B cell (primary cell): ENCODE measurements at regions of chr1 and their contacts with region 1.

Region 1: GRCh38 chr1:244835276-244836134 is at the start of gene COX20:
- DNase-seq: peak; percentile 97
- ATAC-seq: peak; percentile 69
- H3K4me3 ChIP-seq: peak within 1 kb of the TSS; percentile 89 to 98 (median 94)
- H3K4me3 Mint-ChIP-seq: peak within 1 kb of the TSS; percentile 100
- H3K27ac ChIP-seq: peak within 1 kb of the TSS; percentile 97
- H3K27ac Mint-ChIP-seq: peak within 1 kb of the TSS; percentile 100
- H3K4me1 ChIP-seq: peaks cover 21 to 27% of the 10 kb centered on the region in 2 donors
- H3K4me1 Mint-ChIP-seq: peaks cover 59% of the 10 kb centered on the region
- H3K27me3 ChIP-seq: no peaks in the 10 kb centered on the region
- H3K27me3 Mint-ChIP-seq: no peaks in the 10 kb centered on the region
- CTCF ChIP-seq: peak; percentile 13
- total RNA-seq, gene COX20: 35.7 and 37.7 TPM in 2 replicates

Region 2: GRCh38 chr1:244451951-244452795 is 383.3 kb before region 1 on chr1:
- CTCF ChIA-PET with region 1: no interaction called
- POLR2A ChIA-PET with region 1: no interaction called
- intact Hi-C with region 1: loop called (anchors 1 kb)
- DNase-seq: peak; percentile 100
- ATAC-seq: peak; percentile 92
- H3K4me3 ChIP-seq: peak overlapping the region in 4 of 5 experiments; percentile 88 to 98 (median 93)
- H3K4me3 Mint-ChIP-seq: peak overlapping the region; percentile 95
- H3K27ac ChIP-seq: peak overlapping the region; percentile 92 to 94
- H3K27ac Mint-ChIP-seq: peak overlapping the region; percentile 94
- H3K4me1 ChIP-seq: peaks cover 17 to 18% of the 10 kb centered on the region in 2 donors
- H3K4me1 Mint-ChIP-seq: peaks cover 35% of the 10 kb centered on the region
- H3K27me3 ChIP-seq: no peaks in the 10 kb centered on the region
- H3K27me3 Mint-ChIP-seq: no peaks in the 10 kb centered on the region
- CTCF ChIP-seq: peak; percentile 47

Region 3: DNA sequence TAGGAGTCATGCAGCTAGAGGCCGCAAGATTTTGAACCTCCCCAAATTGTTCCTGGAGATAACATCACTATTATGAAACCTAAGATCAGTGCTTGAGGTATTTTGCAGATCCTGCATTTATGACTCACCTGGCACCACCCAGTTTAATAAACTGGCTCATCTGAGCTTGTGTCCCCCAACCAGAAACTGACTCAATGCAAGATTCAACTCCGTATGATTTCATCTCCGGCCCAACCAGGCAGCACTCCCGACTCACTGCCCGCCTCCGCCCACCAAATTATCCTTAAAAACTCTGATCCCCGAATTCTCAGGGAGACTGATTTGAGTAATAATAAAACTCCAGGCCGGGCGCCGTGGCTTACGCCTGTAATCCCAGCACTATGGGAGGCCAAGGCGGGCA is 95.4 kb before region 1 on chr1:
- CTCF ChIA-PET with region 1: no interaction called
- POLR2A ChIA-PET with region 1: no interaction called
- intact Hi-C with region 1: no loop called
- DNase-seq: no peak
- ATAC-seq: no peak
- H3K4me3 ChIP-seq: no peak overlapping the region
- H3K4me3 Mint-ChIP-seq: no peak overlapping the region
- H3K27ac ChIP-seq: no peak overlapping the region
- H3K27ac Mint-ChIP-seq: no peak overlapping the region
- H3K4me1 ChIP-seq: peaks cover 5 to 7% of the 10 kb centered on the region in 2 donors
- H3K4me1 Mint-ChIP-seq: peaks cover 12% of the 10 kb centered on the region
- H3K27me3 ChIP-seq: no peaks in the 10 kb centered on the region
- H3K27me3 Mint-ChIP-seq: no peaks in the 10 kb centered on the region
- CTCF ChIP-seq: no peak

Region 4: GRCh38 chr1:244815600-244816099 is 19.9 kb before region 1 on chr1:
- CTCF ChIA-PET with region 1: interaction called, 6 read pairs
- POLR2A ChIA-PET with region 1: interaction called, 26 read pairs
- intact Hi-C with region 1: loop called (anchors 1 kb)
- DNase-seq: peak; percentile 76
- ATAC-seq: peak; percentile 69
- H3K4me3 ChIP-seq: peak overlapping the region; percentile 47 to 68 (median 55)
- H3K4me3 Mint-ChIP-seq: peak overlapping the region; percentile 82
- H3K27ac ChIP-seq: peak overlapping the region; percentile 10 to 16
- H3K27ac Mint-ChIP-seq: peak overlapping the region; percentile 73
- H3K4me1 ChIP-seq: peaks cover 20 to 28% of the 10 kb centered on the region in 2 donors
- H3K4me1 Mint-ChIP-seq: peaks cover 27% of the 10 kb centered on the region
- H3K27me3 ChIP-seq: no peaks in the 10 kb centered on the region
- H3K27me3 Mint-ChIP-seq: no peaks in the 10 kb centered on the region
- CTCF ChIP-seq: no peak

Region 5: DNA sequence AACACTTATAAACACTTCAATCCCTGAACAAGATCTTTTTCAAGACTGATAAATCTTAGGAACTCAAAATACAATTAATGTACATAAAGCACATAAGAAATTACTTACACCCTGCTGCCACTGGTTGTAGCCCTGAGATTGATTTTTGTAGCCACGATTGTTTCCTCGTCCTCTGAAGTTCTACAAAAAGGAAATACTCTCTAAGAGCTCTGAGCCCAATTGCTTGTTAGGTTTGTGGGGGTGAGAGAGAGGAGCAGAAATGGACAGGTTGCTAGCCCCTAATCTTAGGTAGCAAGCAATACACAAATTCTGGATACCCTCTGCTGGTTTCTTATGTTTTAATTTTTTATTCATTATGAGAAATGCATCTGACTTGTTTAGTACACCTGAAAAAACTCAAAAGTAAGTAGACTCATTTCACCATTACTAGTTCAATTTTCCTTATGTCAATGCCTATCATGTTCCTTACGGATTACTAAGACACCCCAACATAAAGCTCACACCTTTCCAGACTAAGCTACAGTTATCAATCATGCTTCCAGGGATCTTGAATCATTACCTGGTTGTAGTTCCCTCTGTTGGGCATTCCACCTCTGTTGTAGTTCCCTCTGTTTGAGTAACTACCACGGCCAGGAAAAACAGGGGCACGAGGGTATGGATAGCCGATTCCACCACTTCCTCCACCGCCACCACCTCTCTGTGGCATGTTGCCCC is 19.5 kb after region 1 on chr1:
- CTCF ChIA-PET with region 1: interaction called, 4 read pairs
- POLR2A ChIA-PET with region 1: interaction called, 11 read pairs
- intact Hi-C with region 1: no loop called
- DNase-seq: no peak
- ATAC-seq: no peak
- H3K4me3 ChIP-seq: no peak overlapping the region
- H3K4me3 Mint-ChIP-seq: peak overlapping the region; percentile 5
- H3K27ac ChIP-seq: peak overlapping the region in 1 of 2 donors; percentile 52
- H3K27ac Mint-ChIP-seq: peak overlapping the region; percentile 64
- H3K4me1 ChIP-seq: peaks cover 22 to 34% of the 10 kb centered on the region in 2 donors
- H3K4me1 Mint-ChIP-seq: peaks cover 50% of the 10 kb centered on the region
- H3K27me3 ChIP-seq: no peaks in the 10 kb centered on the region
- H3K27me3 Mint-ChIP-seq: no peaks in the 10 kb centered on the region
- CTCF ChIP-seq: no peak